ENCODE measurements at regions of chr4 and their contacts with region 1.

Region 1: DNA sequence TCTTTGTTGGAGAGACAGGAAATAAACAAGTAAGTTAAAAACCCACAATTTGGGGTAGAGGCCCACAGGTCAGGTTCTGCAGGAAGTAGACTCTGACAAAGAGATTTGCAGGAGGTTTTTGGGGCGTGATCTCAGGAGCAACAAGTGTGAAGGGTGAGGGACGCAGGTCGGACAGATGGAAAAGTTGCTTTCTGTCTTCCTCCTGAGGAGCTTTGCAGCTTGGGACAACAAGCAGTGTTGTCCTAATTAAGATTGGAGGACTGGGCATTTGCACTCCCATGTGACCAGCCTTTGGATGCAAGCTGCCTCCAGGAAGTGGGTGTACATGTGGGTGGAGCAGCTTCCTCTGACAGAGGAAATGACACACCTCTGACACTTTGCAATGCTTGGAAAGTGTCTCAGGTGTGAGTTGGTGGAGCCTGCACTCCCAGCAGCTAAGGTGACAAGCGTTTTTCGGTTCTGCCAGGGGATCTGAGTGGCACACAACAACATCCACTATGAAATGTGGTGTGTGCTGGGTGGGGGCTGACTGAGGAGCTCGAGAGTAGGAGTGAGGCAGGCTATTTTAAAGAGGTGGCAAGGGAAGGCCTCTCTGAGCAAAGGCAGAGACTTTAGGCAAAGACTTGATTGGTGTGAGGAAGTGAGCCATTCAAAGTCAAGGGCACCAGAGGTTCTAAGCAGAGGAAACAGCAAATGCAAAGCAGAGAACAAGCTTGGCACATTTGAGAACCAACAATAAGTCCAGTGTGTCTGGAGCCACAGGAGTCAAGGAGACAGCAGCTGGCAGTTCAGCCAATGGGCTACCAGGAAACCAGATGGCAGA is 339.8 kb upstream of the GATB start:
- DNase-seq: peak; percentile 92
- H3K4me3 Mint-ChIP-seq: peak overlapping the region; percentile 71
- H3K27ac Mint-ChIP-seq: peak overlapping the region; percentile 98
- H3K4me1 Mint-ChIP-seq: peaks cover 88% of the 10 kb centered on the region
- H3K27me3 Mint-ChIP-seq: no peaks in the 10 kb centered on the region

Region 2: DNA sequence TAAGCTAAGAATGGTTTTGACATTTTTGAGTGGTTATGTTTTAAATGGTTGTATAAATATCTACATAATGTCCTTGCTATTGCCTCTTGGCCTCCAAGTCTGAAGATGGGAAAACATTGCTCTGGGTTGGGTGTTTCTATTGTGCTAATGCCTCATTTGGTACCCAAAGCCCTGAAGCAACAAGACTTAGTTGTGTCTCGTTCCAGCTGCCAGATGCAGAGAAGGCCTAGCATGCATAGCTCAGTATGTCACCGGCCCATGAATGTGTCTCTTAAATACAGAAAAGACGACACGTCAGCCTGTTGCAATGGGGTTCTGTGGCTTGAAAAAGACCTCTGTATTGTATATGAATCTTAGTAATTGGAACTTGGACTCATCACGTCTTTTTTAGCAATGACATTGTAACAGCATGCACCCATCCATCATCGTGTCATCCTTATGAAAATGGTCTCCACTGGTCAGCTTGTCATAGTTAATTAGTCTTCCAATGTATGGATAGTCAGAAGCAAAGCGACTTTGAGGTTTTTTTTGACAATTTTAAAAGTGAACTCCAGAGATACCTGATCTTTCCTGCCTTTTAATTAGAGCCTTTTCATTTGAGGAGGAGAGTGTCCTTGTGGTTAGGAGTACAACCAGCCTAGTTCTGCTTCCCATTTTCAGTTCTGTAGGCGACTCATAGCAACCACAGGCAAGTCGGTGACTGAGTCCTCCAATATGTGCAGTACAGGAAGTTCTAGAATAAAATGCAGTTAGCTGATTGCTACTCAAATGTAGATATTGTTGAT is 213.4 kb before region 1 on chr4:
- CTCF ChIA-PET with region 1: no interaction called
- intact Hi-C with region 1: loop called (anchors 1 kb)
- DNase-seq: peak; percentile 14
- H3K4me3 Mint-ChIP-seq: no peak overlapping the region
- H3K27ac Mint-ChIP-seq: peak overlapping the region; percentile 28
- H3K4me1 Mint-ChIP-seq: peaks cover 21% of the 10 kb centered on the region
- H3K27me3 Mint-ChIP-seq: no peaks in the 10 kb centered on the region

Region 3: DNA sequence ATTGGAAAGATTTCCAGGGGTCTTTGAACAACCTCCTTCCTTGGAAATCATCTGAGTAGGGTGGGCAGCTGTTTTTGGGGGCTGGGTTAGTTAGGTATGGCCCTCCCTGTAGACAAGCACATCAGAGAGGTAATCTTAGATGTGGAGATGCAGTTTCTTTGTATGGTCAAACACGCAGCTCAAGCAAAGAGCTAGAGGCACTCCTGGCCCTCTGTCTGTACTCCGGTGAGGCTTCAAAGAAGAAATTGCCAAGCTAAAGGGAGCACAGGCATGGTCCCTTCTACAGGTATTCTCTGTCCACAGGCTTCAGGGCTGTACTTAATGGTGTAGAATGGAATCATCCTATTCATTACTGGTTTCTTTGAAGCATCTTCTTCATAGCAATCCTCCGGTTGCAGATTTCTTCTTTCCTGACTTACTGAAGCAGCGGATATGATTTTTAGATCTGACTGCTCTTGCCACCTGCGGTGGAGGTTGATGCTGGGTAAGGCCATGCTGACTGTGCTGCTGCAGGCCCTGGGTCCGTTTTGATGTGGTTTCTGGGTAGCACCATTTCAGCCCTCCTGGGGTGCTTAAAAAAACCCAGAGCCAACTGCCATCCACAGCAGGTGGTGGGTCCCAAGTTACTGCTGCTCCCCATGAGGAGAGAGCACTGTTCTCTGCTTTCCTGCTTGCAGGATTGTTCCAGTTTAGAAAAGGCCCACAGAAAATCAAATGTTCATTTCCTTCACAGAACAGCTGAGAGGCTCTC is 20.9 kb before region 1 on chr4:
- CTCF ChIA-PET with region 1: interaction called, 4 read pairs
- intact Hi-C with region 1: loop called (anchors 1 kb)
- DNase-seq: peak; percentile 73
- H3K4me3 Mint-ChIP-seq: peak overlapping the region; percentile 38
- H3K27ac Mint-ChIP-seq: peak overlapping the region; percentile 79
- H3K4me1 Mint-ChIP-seq: peaks cover 66% of the 10 kb centered on the region
- H3K27me3 Mint-ChIP-seq: no peaks in the 10 kb centered on the region

Region 4: GRCh38 chr4:152115794-152116193 is 15.2 kb after region 1 on chr4:
- CTCF ChIA-PET with region 1: no interaction called
- intact Hi-C with region 1: loop called (anchors 2 kb)
- DNase-seq: peak; percentile 65
- H3K4me3 Mint-ChIP-seq: peak overlapping the region; percentile 56
- H3K27ac Mint-ChIP-seq: peak overlapping the region; percentile 83
- H3K4me1 Mint-ChIP-seq: peaks cover 56% of the 10 kb centered on the region
- H3K27me3 Mint-ChIP-seq: no peaks in the 10 kb centered on the region

Region 5: DNA sequence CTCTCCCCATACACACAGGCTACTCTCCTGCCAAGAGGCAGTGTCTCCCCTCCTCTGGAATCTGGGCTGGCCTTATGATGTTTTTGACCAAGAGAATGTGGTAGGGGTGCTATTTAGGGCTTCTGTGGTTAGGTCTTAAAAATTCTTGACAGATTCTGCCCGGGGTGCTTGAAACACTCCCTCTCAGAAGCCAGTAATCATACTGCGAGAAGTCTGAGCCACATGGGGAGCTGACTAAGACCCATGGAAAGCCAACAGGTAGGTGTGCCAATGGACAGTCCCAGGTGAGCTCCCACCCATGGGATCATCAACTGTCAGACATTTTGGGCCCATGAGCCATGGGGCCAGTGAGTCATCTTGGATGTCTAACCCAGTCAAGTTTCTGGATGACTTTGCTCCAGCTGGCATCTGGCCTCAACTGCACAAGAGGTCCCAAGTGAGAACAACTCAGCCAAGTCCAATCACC is 119.6 kb after region 1 on chr4:
- CTCF ChIA-PET with region 1: no interaction called
- intact Hi-C with region 1: loop called (anchors 1 kb)
- DNase-seq: peak; percentile 72
- H3K4me3 Mint-ChIP-seq: no peak overlapping the region
- H3K27ac Mint-ChIP-seq: peak overlapping the region; percentile 41
- H3K4me1 Mint-ChIP-seq: peaks cover 29% of the 10 kb centered on the region
- H3K27me3 Mint-ChIP-seq: no peaks in the 10 kb centered on the region

Region 6: DNA sequence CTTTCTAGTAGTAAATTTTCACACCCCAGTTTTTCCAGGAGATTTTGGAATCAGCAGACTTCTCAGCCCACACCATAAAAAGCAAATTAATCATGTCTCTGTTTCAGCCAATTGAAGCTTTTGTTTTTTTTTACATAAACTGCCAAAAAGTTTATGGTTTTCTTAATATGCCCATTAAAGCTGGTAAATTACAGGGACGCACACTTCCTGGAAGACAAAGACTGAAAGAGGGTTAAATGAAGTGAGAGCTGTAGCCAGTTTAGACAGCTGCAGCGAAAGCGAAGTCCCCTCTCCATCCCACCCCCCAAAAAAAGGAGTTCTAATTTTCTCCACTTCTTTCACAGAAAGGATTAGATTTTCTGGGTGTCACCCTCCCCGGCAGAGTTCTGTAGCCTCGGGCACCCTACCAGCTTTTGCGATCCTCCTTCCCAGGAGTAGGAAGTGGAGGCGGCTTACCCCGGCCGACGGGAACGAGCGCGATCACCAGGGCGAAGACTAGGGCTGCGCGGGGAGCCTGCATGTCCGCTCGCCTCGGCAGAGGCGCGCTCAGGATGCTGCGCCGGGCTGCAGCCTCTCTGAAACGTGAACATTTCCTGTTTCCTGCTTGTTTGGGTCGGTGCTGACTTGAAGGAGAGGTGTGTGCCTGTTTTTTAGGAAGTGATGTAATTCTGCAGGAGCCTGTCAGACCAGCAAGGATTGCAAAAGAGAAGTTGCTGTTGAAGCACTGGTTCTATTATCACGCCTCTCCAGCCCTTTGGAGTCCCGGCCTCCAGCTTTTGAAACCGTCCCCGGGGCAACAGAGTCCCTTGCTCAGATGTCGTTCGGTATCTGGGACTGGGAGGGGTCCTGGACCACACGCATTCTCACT is 579.1 kb after region 1 on chr4 and contains the start of gene TMEM154:
- CTCF ChIA-PET with region 1: no interaction called
- intact Hi-C with region 1: loop called (anchors 1 kb)
- DNase-seq: peak; percentile 83
- H3K4me3 Mint-ChIP-seq: peak within 1 kb of the TSS; percentile 87
- H3K27ac Mint-ChIP-seq: peak within 1 kb of the TSS; percentile 85
- H3K4me1 Mint-ChIP-seq: peaks cover 59% of the 10 kb centered on the region
- H3K27me3 Mint-ChIP-seq: no peaks in the 10 kb centered on the region
- total RNA-seq, gene TMEM154: 17.3 to 20.4 TPM

Measured in activated naive CD4-positive, alpha-beta T cell treated with anti-CD3 and anti-CD28 coated beads for 36 hours (primary cell).